ENCODE measurements at regions of chr2 and their contacts with region 1.

Region 1: GRCh38 chr2:181891258-181891965 is at the start of gene ITPRID2:
- DNase-seq: no peak
- ATAC-seq: peak; percentile 95
- H3K4me3 ChIP-seq: peak within 1 kb of the TSS; percentile 72 to 93
- H3K27ac ChIP-seq: peak within 1 kb of the TSS; percentile 96
- H3K4me1 ChIP-seq: peaks cover 49% of the 10 kb centered on the region
- H3K27me3 ChIP-seq: no peaks in the 10 kb centered on the region
- CTCF ChIP-seq: peak; percentile 26; the same call in 1 of the 2 replicates
- total RNA-seq, gene ITPRID2: 261 TPM

Region 2: GRCh38 chr2:181742922-181743722 is 148.3 kb before region 1 on chr2:
- CTCF ChIA-PET with region 1: interaction called, 4 read pairs
- POLR2A ChIA-PET with region 1: no interaction called
- in situ Hi-C with region 1: no loop called
- intact Hi-C with region 1: loop called (anchors 5 kb)
- DNase-seq: peak; percentile 47
- ATAC-seq: peak; percentile 83
- H3K4me3 ChIP-seq: no peak overlapping the region
- H3K27ac ChIP-seq: peak overlapping the region; percentile 84
- H3K4me1 ChIP-seq: peaks cover 12% of the 10 kb centered on the region
- H3K27me3 ChIP-seq: no peaks in the 10 kb centered on the region
- CTCF ChIP-seq: peak; percentile 70; the same call in 1 of the 2 replicates

Region 3: DNA sequence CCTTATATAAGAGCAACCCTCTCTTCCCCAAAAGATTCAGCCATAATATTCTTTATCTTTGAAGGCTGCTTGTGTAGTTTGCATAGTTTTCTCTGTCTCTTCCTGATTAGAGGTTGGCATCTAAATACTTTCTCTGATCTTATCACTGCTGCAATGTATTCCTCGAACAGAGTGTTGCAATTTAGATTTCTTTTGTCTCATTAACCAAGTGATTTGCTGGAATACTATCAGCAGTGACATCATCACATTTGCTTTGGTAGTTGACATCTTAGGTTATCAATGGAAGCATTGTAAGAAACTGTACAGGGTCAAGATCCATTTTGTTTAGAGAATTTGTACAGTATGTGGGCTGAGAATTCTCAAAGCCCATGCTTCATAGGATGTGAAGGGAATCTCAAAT is 139.1 kb before region 1 on chr2:
- CTCF ChIA-PET with region 1: no interaction called
- POLR2A ChIA-PET with region 1: no interaction called
- in situ Hi-C with region 1: loop called (anchors 10 kb)
- intact Hi-C with region 1: no loop called
- DNase-seq: no peak
- ATAC-seq: no peak
- H3K4me3 ChIP-seq: no peak overlapping the region
- H3K27ac ChIP-seq: no peak overlapping the region
- H3K4me1 ChIP-seq: no peaks in the 10 kb centered on the region; the same call in 1 of the 2 replicates
- H3K27me3 ChIP-seq: no peaks in the 10 kb centered on the region
- CTCF ChIP-seq: no peak

Region 4: GRCh38 chr2:181790716-181791649 is 100.4 kb before region 1 on chr2:
- CTCF ChIA-PET with region 1: no interaction called
- POLR2A ChIA-PET with region 1: interaction called, 3 read pairs
- in situ Hi-C with region 1: no loop called
- intact Hi-C with region 1: loop called (anchors 5 kb)
- DNase-seq: peak; percentile 95
- ATAC-seq: peak; percentile 98
- H3K4me3 ChIP-seq: peak overlapping the region in 1 of 2 experiments; percentile 6; a peak in 1 of 4 replicates
- H3K27ac ChIP-seq: peak overlapping the region; percentile 97
- H3K4me1 ChIP-seq: peaks cover 34% of the 10 kb centered on the region
- H3K27me3 ChIP-seq: no peaks in the 10 kb centered on the region
- CTCF ChIP-seq: no peak

Measured in Panc1 (cell line).